Mammary epithelial cell (primary cell): ENCODE measurements at regions of chr6 and their contacts with region 1.

Region 1: GRCh38 chr6:26322645-26323482 is 42.1 kb upstream of the BTN3A2 start:
- DNase-seq: peak; percentile 90
- H3K4me3 ChIP-seq: peak overlapping the region; percentile 54 to 87 (median 60)
- H3K27ac ChIP-seq: peak overlapping the region; percentile 34
- H3K4me1 ChIP-seq: no peaks in the 10 kb centered on the region
- H3K27me3 ChIP-seq: no peaks in the 10 kb centered on the region
- CTCF ChIP-seq: no peak

Region 2: DNA sequence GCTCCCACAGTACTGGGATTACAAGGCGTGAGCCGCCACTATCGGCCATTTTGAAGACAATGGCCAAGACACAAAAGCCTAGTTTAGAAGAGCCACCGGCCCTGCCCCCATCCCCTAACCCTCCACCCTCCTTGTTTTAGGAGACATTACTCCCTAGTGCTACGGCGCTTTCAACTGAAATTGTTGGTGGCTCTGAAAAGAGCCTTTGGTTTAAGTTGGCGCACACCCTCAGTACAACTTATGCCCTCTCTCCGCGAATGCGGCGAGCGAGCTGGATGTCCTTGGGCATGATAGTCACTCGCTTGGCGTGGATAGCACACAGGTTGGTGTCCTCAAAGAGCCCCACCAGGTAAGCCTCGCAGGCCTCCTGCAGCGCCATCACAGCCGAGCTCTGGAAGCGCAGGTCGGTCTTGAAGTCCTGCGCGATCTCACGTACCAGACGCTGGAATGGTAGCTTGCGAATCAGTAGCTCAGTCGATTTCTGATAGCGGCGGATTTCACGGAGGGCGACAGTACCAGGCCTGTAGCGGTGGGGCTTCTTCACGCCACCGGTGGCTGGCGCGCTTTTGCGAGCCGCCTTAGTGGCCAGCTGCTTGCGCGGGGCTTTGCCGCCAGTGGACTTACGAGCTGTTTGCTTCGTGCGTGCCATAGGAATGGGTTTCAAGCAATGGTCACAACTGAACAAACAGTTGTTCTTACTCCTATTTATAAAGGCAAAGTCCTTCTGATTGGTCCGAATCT is 72.7 kb before region 1 on chr6:
- CTCF ChIA-PET with region 1: no interaction called
- dilution Hi-C with region 1: no loop called
- in situ Hi-C with region 1: no loop called
- intact Hi-C with region 1: no loop called
- DNase-seq: peak; percentile 84
- H3K4me3 ChIP-seq: peak overlapping the region; percentile 62 to 71 (median 69)
- H3K27ac ChIP-seq: peak overlapping the region; percentile 53
- H3K4me1 ChIP-seq: peaks cover 8% of the 10 kb centered on the region
- H3K27me3 ChIP-seq: no peaks in the 10 kb centered on the region
- CTCF ChIP-seq: peak; percentile 37 to 68

Region 3: GRCh38 chr6:27078734-27079357 is 756.0 kb after region 1 on chr6:
- CTCF ChIA-PET with region 1: no interaction called
- dilution Hi-C with region 1: no loop called
- in situ Hi-C with region 1: loop called in 1 of 2 experiments (anchors 25 kb)
- intact Hi-C with region 1: no loop called
- DNase-seq: peak; percentile 58
- H3K4me3 ChIP-seq: peak overlapping the region; percentile 49 to 55 (median 52)
- H3K27ac ChIP-seq: no peak overlapping the region
- H3K4me1 ChIP-seq: peaks cover 4% of the 10 kb centered on the region
- H3K27me3 ChIP-seq: no peaks in the 10 kb centered on the region
- CTCF ChIP-seq: peak; percentile 69 to 81

Region 4: GRCh38 chr6:27091661-27092646 is 769.1 kb after region 1 on chr6:
- CTCF ChIA-PET with region 1: no interaction called
- dilution Hi-C with region 1: no loop called
- in situ Hi-C with region 1: loop called in 1 of 2 experiments (anchors 25 kb)
- intact Hi-C with region 1: loop called (anchors 10 kb)
- DNase-seq: peak; percentile 88
- H3K4me3 ChIP-seq: peak overlapping the region; percentile 39 to 58 (median 53)
- H3K27ac ChIP-seq: peak overlapping the region; percentile 23
- H3K4me1 ChIP-seq: peaks cover 17% of the 10 kb centered on the region
- H3K27me3 ChIP-seq: no peaks in the 10 kb centered on the region
- CTCF ChIP-seq: no peak